ENCODE measurements at regions of chr21 and their contacts with region 1.

Region 1: DNA sequence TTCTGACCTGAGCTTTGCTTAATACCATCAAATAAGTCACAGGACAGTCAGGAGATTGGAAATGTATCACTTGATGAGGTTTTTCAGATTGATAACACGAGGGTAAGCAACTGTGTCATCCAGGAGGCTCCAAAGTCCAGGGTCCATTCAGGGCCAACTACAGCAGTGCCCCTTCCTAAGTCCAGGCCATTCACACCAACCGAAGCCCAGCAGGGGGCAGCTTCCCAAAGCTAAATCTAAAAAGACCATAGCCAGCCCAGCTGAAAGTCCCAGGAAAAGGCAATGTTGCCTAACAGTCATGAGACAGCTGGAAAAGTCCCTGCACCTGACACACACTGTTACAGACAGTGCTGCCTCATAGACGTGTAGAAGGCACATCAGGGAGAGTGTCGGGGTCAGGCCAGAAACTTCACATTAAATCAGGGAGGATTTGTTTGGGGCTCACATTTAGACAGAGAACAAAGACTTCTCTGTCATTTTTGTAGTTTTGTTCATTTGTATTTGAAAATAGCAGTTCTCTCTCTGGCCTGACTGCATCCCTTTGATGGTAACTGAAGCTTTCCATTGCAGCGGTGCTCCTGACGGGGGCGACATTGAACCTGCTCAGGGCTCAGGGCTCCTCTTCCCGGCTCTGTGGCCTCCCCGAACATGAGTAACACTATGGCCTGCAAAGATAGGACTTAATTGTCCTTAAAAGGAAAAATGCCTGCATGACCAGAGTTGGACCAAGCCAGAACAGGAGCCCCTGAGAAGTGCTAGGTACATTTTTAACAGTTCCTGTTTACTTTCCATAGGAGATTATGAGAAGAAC is 200.4 kb downstream of the NRIP1 start:
- DNase-seq: peak; percentile 73 to 80
- H3K4me3 ChIP-seq: no peak overlapping the region
- H3K4me3 Mint-ChIP-seq: no peak overlapping the region
- H3K27ac Mint-ChIP-seq: no peak overlapping the region
- H3K4me1 ChIP-seq: peaks cover 23% of the 10 kb centered on the region
- H3K4me1 Mint-ChIP-seq: peaks cover 28% of the 10 kb centered on the region
- H3K27me3 ChIP-seq: no peaks in the 10 kb centered on the region
- H3K27me3 Mint-ChIP-seq: no peaks in the 10 kb centered on the region
- CTCF ChIP-seq: peak; percentile 42 to 47

Region 2: DNA sequence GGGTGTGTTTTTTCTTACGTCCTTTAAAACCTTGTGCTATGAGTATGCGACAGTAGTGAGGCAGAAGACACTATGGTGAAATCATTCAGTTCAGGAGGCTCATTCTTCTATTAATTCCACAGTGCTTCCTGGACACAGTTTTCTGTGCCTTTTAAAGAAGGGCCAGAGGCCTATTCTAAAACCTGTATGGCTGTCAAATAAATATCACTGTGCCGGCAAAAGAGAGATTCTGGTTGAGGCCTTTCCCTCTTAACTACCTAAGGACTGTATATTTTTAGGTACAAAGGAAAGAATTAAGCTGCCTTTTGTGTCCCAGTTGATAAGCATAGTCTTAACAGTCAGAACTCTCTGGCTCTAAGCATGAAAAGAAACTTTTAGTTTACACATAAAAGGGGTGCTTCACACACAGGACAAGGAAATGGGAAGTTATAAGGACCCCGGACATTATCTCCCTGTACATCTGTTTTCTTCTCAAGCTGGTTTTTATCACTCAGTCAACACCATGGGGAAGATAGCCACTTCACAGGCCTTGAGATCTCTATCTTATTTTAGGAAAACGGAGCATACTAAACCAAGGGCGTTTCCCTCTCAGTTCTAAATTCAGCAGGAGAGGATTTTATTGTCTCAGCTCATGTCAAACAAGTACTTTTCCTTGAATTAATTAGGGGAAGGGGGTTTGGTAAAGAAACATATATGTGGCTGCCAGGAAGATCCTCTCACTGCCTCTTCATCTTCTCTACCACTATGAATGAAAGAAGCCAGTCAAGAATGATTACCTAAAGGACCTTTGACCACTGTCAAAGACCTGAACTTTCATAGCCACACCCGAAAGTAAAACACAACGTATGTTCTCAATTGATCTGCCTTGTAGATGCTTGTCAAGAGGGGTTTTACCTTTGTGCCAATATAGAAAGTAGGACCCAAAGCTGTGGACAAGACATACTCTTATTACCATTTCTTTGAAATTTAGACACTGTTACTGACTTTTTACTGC is 410.1 kb before region 1 on chr21:
- CTCF ChIA-PET with region 1: no interaction called
- POLR2A ChIA-PET with region 1: no interaction called
- intact Hi-C with region 1: loop called (anchors 10 kb)
- DNase-seq: peak in 1 of 2 experiments; percentile 23
- H3K4me3 ChIP-seq: no peak overlapping the region
- H3K4me3 Mint-ChIP-seq: peak overlapping the region; percentile 16
- H3K27ac Mint-ChIP-seq: peak overlapping the region; percentile 57
- H3K4me1 ChIP-seq: peaks cover 33% of the 10 kb centered on the region
- H3K4me1 Mint-ChIP-seq: peaks cover 44% of the 10 kb centered on the region
- H3K27me3 ChIP-seq: no peaks in the 10 kb centered on the region
- H3K27me3 Mint-ChIP-seq: no peaks in the 10 kb centered on the region
- CTCF ChIP-seq: no peak

Region 3: DNA sequence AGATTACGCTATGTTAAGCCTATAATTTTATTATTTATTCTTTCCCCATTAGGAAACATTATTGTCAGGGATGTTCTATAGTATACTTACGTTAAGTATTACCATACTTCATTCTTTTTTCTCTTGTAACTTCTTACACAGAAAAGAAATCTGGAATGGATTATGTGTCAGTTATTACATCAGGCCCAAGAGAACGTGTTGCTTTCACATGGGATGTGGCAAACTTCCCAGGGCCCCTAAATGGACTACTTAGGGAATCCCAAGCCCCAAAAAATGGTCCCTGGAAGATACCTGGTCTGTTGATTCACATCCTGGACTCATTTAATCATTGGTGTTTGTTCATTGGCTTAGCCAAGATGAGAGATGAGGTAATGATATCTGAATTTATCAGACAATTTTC is 49.4 kb before region 1 on chr21:
- CTCF ChIA-PET with region 1: no interaction called
- POLR2A ChIA-PET with region 1: no interaction called
- intact Hi-C with region 1: no loop called
- DNase-seq: no peak
- H3K4me3 ChIP-seq: no peak overlapping the region
- H3K4me3 Mint-ChIP-seq: no peak overlapping the region
- H3K27ac Mint-ChIP-seq: no peak overlapping the region
- H3K4me1 ChIP-seq: no peaks in the 10 kb centered on the region
- H3K4me1 Mint-ChIP-seq: no peaks in the 10 kb centered on the region
- H3K27me3 ChIP-seq: no peaks in the 10 kb centered on the region
- H3K27me3 Mint-ChIP-seq: no peaks in the 10 kb centered on the region
- CTCF ChIP-seq: no peak

Region 4: DNA sequence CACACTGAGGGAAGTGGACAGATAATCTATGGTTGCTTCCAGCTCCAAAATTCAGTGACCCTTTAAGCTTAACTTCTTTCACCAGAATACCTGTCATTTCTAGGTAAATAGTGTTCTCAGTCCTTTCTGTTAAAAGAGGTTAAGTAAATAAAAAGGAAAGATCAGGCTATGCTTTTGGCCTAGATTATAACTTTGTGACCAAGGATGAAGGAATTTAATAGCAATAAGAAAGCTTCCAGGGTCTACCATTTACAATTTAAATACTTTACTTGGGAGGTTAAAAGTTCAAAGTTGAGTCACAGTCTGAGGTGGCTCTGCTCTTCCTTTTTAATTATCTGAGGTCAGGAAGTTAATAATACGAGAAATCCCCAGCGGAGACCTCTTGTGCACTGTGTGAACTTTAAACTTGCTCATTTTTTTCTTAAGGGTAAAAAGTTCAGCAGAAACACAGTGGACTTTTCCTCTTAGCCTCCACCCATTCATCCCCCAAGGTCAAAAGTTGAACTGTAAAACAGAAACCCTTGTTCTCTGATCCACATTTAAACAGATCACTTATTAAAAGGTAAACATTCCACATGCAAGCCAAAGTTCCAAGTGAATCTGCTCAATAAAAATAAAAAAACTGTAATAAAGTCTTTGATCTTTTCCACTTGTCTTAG is 13.3 kb after region 1 on chr21:
- CTCF ChIA-PET with region 1: no interaction called
- POLR2A ChIA-PET with region 1: no interaction called
- intact Hi-C with region 1: no loop called
- DNase-seq: peak; percentile 46 to 53
- H3K4me3 ChIP-seq: no peak overlapping the region
- H3K4me3 Mint-ChIP-seq: no peak overlapping the region
- H3K27ac Mint-ChIP-seq: peak overlapping the region; percentile 45
- H3K4me1 ChIP-seq: peaks cover 61% of the 10 kb centered on the region
- H3K4me1 Mint-ChIP-seq: peaks cover 56% of the 10 kb centered on the region
- H3K27me3 ChIP-seq: no peaks in the 10 kb centered on the region
- H3K27me3 Mint-ChIP-seq: no peaks in the 10 kb centered on the region
- CTCF ChIP-seq: no peak

Region 5: GRCh38 chr21:15064576-15065391 is 200.4 kb after region 1 on chr21 and contains the start of gene NRIP1:
- CTCF ChIA-PET with region 1: interaction called, 7 read pairs
- POLR2A ChIA-PET with region 1: no interaction called
- intact Hi-C with region 1: loop called (anchors 2 kb)
- DNase-seq: peak; percentile 88 to 91
- H3K4me3 ChIP-seq: peak within 1 kb of the TSS; percentile 85
- H3K4me3 Mint-ChIP-seq: peak within 1 kb of the TSS; percentile 99
- H3K27ac Mint-ChIP-seq: peak within 1 kb of the TSS; percentile 96
- H3K4me1 ChIP-seq: peaks cover 22% of the 10 kb centered on the region
- H3K4me1 Mint-ChIP-seq: peaks cover 33% of the 10 kb centered on the region
- H3K27me3 ChIP-seq: no peaks in the 10 kb centered on the region
- H3K27me3 Mint-ChIP-seq: no peaks in the 10 kb centered on the region
- CTCF ChIP-seq: no peak
- total RNA-seq, gene NRIP1: 24.7 and 28.6 TPM in 2 replicates

Region 6: GRCh38 chr21:15483138-15483780 is 618.8 kb after region 1 on chr21:
- CTCF ChIA-PET with region 1: no interaction called
- POLR2A ChIA-PET with region 1: no interaction called
- intact Hi-C with region 1: loop called (anchors 1 kb)
- DNase-seq: peak; percentile 83 to 86
- H3K4me3 ChIP-seq: no peak overlapping the region
- H3K4me3 Mint-ChIP-seq: no peak overlapping the region
- H3K27ac Mint-ChIP-seq: no peak overlapping the region
- H3K4me1 ChIP-seq: no peaks in the 10 kb centered on the region
- H3K4me1 Mint-ChIP-seq: no peaks in the 10 kb centered on the region
- H3K27me3 ChIP-seq: no peaks in the 10 kb centered on the region
- H3K27me3 Mint-ChIP-seq: no peaks in the 10 kb centered on the region
- CTCF ChIP-seq: peak; percentile 89 to 93

Measured in Caco-2 (cell line).